Left colon (tissue), 2 donors: ENCODE measurements at regions of chr13 and their contacts with region 1.

Region 1: GRCh38 chr13:26985285-26985878 is 186.2 kb downstream of the USP12 start:
- DNase-seq: peak; percentile 68 to 78
- ATAC-seq: peak; percentile 59

Region 2: GRCh38 chr13:26062844-26063444 is 922.4 kb before region 1 on chr13:
- intact Hi-C with region 1: no loop called
- DNase-seq: no peak
- ATAC-seq: peak; percentile 71

Region 3: GRCh38 chr13:26895081-26895807 is 90.1 kb before region 1 on chr13:
- intact Hi-C with region 1: no loop called
- DNase-seq: no peak
- ATAC-seq: no peak

Region 4: GRCh38 chr13:26946684-26947343 is 38.6 kb before region 1 on chr13:
- intact Hi-C with region 1: loop called in 1 of 2 experiments (anchors 2 kb)
- DNase-seq: no peak
- ATAC-seq: peak; percentile 20

Region 5: GRCh38 chr13:27283906-27284493 is 298.6 kb after region 1 on chr13:
- intact Hi-C with region 1: loop called in 1 of 2 experiments (anchors 10 kb)
- DNase-seq: no peak
- ATAC-seq: peak; percentile 75

Region 6: GRCh38 chr13:27362064-27362883 is 376.9 kb after region 1 on chr13:
- intact Hi-C with region 1: loop called (anchors 2 to 10 kb)
- DNase-seq: peak; percentile 82 to 93
- ATAC-seq: peak; percentile 95